Activated CD4-positive, alpha-beta memory T cell treated with anti-CD3 and anti-CD28 coated beads for 36 hours (primary cell): ENCODE measurements at regions of chr4 and their contacts with region 1.

Region 1: DNA sequence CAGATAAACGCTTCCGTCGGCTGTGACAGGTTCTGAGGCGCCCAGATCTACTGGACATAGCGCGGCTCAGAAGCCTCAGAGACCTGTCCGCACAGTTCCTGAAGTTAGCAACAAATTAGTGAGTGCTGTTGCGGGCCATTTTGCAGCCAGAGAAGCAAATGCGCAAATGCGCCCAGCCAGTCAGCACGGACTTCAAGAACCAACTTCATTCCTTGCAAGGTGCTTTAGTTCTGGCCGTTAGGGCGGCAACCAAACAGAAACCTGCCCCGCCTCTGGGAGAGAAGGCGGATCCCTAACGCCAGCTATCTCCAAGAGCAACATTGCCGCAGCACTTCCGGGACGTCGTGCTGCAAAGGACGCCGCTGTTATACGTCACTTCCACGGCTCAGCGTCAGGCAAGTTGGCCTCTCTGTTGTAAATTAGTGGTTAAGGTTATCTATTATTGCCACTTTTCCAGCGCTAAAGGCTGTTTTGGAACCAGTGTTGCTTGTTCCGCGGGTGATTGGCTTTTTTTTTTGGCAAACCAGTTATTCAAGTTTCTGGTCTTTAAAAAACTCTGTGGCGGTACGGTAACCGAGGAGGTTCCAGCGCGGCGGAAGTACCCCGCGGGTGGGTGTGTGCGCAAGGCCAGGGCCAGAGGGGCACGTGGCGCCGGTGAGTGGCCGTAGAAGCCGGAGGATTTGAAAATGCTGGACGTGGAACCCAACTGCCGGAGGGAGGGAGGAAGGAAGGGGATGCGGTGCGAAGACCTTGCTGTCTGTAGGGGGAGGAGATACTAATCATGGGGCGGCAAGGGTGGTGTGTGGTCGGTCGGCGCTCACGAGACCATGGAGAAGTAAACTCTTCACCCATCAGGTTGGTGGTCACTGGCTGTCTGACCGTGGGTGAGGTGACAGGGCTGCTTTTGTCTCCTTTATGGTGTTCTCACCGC is at the start of gene GAR1:
- DNase-seq: peak; percentile 94
- H3K4me3 Mint-ChIP-seq: peak within 1 kb of the TSS; percentile 99
- H3K27ac Mint-ChIP-seq: peak within 1 kb of the TSS; percentile 96
- H3K4me1 Mint-ChIP-seq: peaks cover 39% of the 10 kb centered on the region
- H3K27me3 Mint-ChIP-seq: no peaks in the 10 kb centered on the region
- total RNA-seq, gene GAR1: 30.5 to 32.8 TPM

Region 2: GRCh38 chr4:108337923-108338322 is 1477.5 kb before region 1 on chr4:
- CTCF ChIA-PET with region 1: no interaction called
- POLR2A ChIA-PET with region 1: no interaction called
- intact Hi-C with region 1: no loop called
- DNase-seq: no peak
- H3K4me3 Mint-ChIP-seq: no peak overlapping the region
- H3K27ac Mint-ChIP-seq: no peak overlapping the region
- H3K4me1 Mint-ChIP-seq: peaks cover 11% of the 10 kb centered on the region
- H3K27me3 Mint-ChIP-seq: no peaks in the 10 kb centered on the region

Region 3: GRCh38 chr4:108972613-108973283 is 842.7 kb before region 1 on chr4:
- CTCF ChIA-PET with region 1: no interaction called
- POLR2A ChIA-PET with region 1: no interaction called
- intact Hi-C with region 1: loop called (anchors 5 kb)
- DNase-seq: no peak
- H3K4me3 Mint-ChIP-seq: no peak overlapping the region
- H3K27ac Mint-ChIP-seq: peak overlapping the region; percentile 68
- H3K4me1 Mint-ChIP-seq: peaks cover 22% of the 10 kb centered on the region
- H3K27me3 Mint-ChIP-seq: no peaks in the 10 kb centered on the region

Region 4: GRCh38 chr4:109588176-109588575 is 227.2 kb before region 1 on chr4:
- CTCF ChIA-PET with region 1: no interaction called
- POLR2A ChIA-PET with region 1: no interaction called
- intact Hi-C with region 1: loop called (anchors 1 kb)
- DNase-seq: peak; percentile 81
- H3K4me3 Mint-ChIP-seq: no peak overlapping the region
- H3K27ac Mint-ChIP-seq: peak overlapping the region; percentile 58
- H3K4me1 Mint-ChIP-seq: peaks cover 64% of the 10 kb centered on the region
- H3K27me3 Mint-ChIP-seq: no peaks in the 10 kb centered on the region

Region 5: GRCh38 chr4:109729718-109730618 is 85.4 kb before region 1 on chr4 and contains the start of gene PLA2G12A:
- CTCF ChIA-PET with region 1: no interaction called
- POLR2A ChIA-PET with region 1: no interaction called
- intact Hi-C with region 1: loop called (anchors 1 kb)
- DNase-seq: peak; percentile 79
- H3K4me3 Mint-ChIP-seq: peak within 1 kb of the TSS; percentile 82
- H3K27ac Mint-ChIP-seq: peak within 1 kb of the TSS; percentile 55
- H3K4me1 Mint-ChIP-seq: peaks cover 9% of the 10 kb centered on the region
- H3K27me3 Mint-ChIP-seq: no peaks in the 10 kb centered on the region
- total RNA-seq, gene PLA2G12A: 17.9 to 21.6 TPM

Region 6: DNA sequence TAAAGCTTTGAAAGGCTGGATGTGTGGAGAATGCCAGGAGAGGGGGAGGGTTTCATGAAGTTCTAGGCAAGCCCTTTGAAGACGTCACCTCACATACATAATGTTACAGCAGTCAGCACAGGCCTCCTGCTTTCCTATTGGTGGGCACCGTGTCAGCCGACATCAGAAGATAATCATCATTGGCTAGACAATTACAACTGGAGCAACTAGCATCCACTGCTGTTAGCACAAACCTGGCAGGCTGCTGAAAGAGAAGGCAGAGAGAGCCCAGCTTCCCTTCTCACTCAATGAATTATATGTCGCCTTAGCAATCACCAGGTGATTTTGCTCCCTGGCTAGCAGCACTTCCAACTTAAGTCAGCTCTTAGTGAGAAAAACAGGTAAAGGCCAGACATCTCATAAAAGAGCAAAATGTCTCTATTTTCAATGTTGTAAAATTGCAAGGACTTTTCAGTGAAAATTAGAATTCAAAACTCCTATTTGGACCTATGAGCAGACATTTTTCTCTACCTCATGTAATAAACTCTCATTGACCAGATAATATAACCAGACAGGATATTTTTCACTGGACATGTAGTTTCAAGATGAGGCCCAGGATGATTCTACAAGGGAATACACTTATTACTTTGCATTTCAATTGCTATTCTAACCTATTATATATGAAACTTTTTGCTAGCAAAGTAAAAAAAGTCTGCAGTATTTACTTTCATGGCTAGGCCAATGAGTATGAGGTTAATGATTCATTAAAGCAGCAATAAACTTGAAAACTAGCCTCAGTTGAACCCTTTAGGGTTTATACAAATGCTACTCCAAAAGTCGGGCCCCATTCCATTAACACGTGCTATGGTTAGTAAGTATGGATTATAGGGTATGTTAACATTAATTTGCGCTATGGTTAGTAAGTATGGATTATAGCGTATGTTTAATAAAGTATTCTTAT is 378.7 kb after region 1 on chr4:
- CTCF ChIA-PET with region 1: no interaction called
- POLR2A ChIA-PET with region 1: no interaction called
- intact Hi-C with region 1: loop called (anchors 2 kb)
- DNase-seq: peak; percentile 89
- H3K4me3 Mint-ChIP-seq: peak overlapping the region; percentile 59
- H3K27ac Mint-ChIP-seq: peak overlapping the region; percentile 93
- H3K4me1 Mint-ChIP-seq: peaks cover 20% of the 10 kb centered on the region
- H3K27me3 Mint-ChIP-seq: no peaks in the 10 kb centered on the region

Region 7: GRCh38 chr4:110527156-110527555 is 711.7 kb after region 1 on chr4:
- CTCF ChIA-PET with region 1: no interaction called
- POLR2A ChIA-PET with region 1: no interaction called
- intact Hi-C with region 1: loop called (anchors 2 kb)
- DNase-seq: peak; percentile 69
- H3K4me3 Mint-ChIP-seq: no peak overlapping the region
- H3K27ac Mint-ChIP-seq: no peak overlapping the region
- H3K4me1 Mint-ChIP-seq: peaks cover 16% of the 10 kb centered on the region
- H3K27me3 Mint-ChIP-seq: peaks cover 2% of the 10 kb centered on the region